ENCODE measurements at regions of chr4 and their contacts with region 1.

Region 1: DNA sequence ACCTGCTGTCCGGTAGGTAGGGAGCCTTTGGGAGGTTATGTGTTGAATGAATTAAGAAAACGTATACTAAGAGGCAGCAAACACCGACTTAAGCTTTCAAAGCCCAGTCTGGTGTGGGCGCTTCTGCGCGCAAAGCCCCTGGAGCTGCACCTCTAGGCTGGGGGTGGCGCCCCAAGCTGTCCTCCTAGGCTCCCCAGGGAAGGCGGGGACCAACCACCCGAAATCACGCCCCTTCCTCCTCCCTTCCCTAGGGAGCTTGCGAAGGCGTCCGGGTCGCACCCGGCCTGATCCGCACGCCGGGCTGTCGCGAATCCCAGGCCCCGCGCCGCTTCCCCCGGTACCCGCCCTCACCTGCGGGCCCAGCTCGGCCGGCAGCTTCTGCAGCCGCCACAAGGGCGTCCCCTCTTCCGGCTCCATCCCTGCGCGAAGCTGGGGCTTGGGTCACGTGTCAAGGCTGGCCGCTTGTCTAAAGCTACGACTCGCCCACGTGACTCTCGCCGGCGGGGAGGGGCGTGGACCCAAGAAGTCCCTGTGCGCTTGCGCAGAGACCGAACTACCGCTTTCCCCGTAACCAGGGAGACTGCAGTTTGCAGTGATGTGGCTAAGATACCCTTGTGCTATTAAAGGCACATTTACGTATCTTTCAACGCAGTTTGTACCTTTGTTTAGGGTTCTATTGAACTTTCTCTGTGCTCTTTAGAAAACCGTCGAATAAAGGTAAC is at the start of gene COMMD8:
- DNase-seq: peak; percentile 96
- H3K4me3 ChIP-seq: peak within 1 kb of the TSS; percentile 56 to 91 (median 84)
- H3K27ac ChIP-seq: peak within 1 kb of the TSS; percentile 44
- H3K4me1 ChIP-seq: peaks cover 5% of the 10 kb centered on the region
- H3K27me3 ChIP-seq: no peaks in the 10 kb centered on the region
- CTCF ChIP-seq: peak in 1 of 2 donors; percentile 32
- POLR2A ChIP-seq: peak; percentile 79
- total RNA-seq, gene COMMD8: 20.3 and 22.3 TPM in 2 replicates

Region 2: DNA sequence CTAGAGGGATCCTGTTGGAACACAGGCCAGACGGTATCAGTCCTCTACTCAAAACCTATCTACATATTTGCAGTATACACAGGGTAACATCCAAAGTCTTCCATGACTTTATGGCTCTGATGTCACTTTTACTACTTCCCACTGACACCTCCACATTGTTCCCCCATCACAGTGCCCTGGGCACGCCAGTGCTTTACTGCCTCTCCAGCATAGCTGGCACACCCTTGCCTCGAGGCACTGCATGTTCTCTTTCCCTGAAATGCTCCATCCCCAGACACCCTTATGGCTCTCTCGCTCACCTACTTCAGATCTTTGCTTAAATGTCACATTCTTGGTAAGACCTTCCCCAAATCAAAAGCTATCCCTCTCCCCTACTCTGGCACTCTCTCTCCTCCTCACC is 15.4 kb after region 1 on chr4:
- CTCF ChIA-PET with region 1: interaction called, 11 read pairs
- POLR2A ChIA-PET with region 1: no interaction called
- dilution Hi-C with region 1: no loop called
- intact Hi-C with region 1: no loop called
- DNase-seq: no peak
- H3K4me3 ChIP-seq: no peak overlapping the region
- H3K27ac ChIP-seq: no peak overlapping the region
- H3K4me1 ChIP-seq: no peaks in the 10 kb centered on the region
- H3K27me3 ChIP-seq: no peaks in the 10 kb centered on the region
- CTCF ChIP-seq: no peak
- POLR2A ChIP-seq: no peak

Region 3: DNA sequence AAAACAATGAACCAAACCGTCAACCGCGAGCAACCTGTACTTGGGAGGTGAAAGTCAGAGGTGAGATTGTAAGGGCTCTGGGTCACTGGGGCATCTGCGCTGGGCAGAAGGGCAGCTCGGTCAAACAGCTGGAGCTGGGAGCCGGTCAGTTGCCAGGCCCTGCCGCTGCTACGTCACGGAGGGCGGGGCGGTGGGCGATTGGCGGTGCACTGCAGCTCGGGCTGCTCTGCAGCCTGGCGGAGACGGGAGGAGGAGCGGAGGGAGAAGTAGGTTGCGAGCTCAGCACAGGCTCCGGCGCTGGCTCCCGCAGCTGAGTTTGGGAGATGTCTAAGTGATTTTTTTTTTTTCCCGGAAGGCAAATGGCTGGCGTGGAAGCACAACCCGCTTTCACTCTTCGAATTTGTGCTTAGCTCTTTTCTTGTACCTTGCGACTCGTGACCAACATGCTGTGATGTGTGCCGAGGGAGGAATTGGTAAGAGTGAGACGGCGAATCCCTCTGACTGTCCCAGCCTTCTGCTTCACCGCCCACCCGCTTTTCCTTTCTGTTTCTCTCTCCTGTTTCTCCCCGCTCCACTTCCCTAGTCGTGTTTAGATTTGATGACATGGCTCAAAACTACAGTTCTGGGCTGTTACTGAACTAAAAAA is 21.8 kb after region 1 on chr4 and contains the start of gene ATP10D:
- CTCF ChIA-PET with region 1: interaction called, 12 read pairs
- POLR2A ChIA-PET with region 1: interaction called, 9 read pairs
- dilution Hi-C with region 1: no loop called
- intact Hi-C with region 1: loop called (anchors 1 kb)
- DNase-seq: peak; percentile 95
- H3K4me3 ChIP-seq: peak within 1 kb of the TSS; percentile 75 to 83 (median 79)
- H3K27ac ChIP-seq: peak within 1 kb of the TSS; percentile 77
- H3K4me1 ChIP-seq: peaks cover 2% of the 10 kb centered on the region
- H3K27me3 ChIP-seq: no peaks in the 10 kb centered on the region
- CTCF ChIP-seq: no peak
- POLR2A ChIP-seq: peak; percentile 94
- total RNA-seq, gene ATP10D: 30.9 and 34.1 TPM in 2 replicates

Region 4: GRCh38 chr4:47531241-47531953 is 68.0 kb after region 1 on chr4:
- CTCF ChIA-PET with region 1: interaction called, 5 read pairs
- POLR2A ChIA-PET with region 1: no interaction called
- dilution Hi-C with region 1: no loop called
- intact Hi-C with region 1: loop called (anchors 1 kb)
- DNase-seq: peak; percentile 81
- H3K4me3 ChIP-seq: no peak overlapping the region
- H3K27ac ChIP-seq: peak overlapping the region; percentile 81
- H3K4me1 ChIP-seq: peaks cover 43% of the 10 kb centered on the region
- H3K27me3 ChIP-seq: no peaks in the 10 kb centered on the region
- CTCF ChIP-seq: no peak
- POLR2A ChIP-seq: peak; percentile 41

Region 5: GRCh38 chr4:47562297-47562696 is 98.9 kb after region 1 on chr4:
- CTCF ChIA-PET with region 1: interaction called, 14 read pairs
- POLR2A ChIA-PET with region 1: no interaction called
- dilution Hi-C with region 1: no loop called
- intact Hi-C with region 1: loop called (anchors 1 kb)
- DNase-seq: no peak
- H3K4me3 ChIP-seq: no peak overlapping the region
- H3K27ac ChIP-seq: no peak overlapping the region
- H3K4me1 ChIP-seq: peaks cover 2% of the 10 kb centered on the region
- H3K27me3 ChIP-seq: no peaks in the 10 kb centered on the region
- CTCF ChIP-seq: no peak
- POLR2A ChIP-seq: no peak

Region 6: GRCh38 chr4:47577779-47578553 is 114.6 kb after region 1 on chr4:
- CTCF ChIA-PET with region 1: interaction called, 6 read pairs
- POLR2A ChIA-PET with region 1: no interaction called
- dilution Hi-C with region 1: no loop called
- intact Hi-C with region 1: loop called (anchors 1 kb)
- DNase-seq: peak; percentile 92
- H3K4me3 ChIP-seq: peak overlapping the region in 1 of 3 experiments; percentile 26
- H3K27ac ChIP-seq: peak overlapping the region; percentile 99
- H3K4me1 ChIP-seq: peaks cover 16% of the 10 kb centered on the region
- H3K27me3 ChIP-seq: no peaks in the 10 kb centered on the region
- CTCF ChIP-seq: no peak
- POLR2A ChIP-seq: peak; percentile 40

Region 7: DNA sequence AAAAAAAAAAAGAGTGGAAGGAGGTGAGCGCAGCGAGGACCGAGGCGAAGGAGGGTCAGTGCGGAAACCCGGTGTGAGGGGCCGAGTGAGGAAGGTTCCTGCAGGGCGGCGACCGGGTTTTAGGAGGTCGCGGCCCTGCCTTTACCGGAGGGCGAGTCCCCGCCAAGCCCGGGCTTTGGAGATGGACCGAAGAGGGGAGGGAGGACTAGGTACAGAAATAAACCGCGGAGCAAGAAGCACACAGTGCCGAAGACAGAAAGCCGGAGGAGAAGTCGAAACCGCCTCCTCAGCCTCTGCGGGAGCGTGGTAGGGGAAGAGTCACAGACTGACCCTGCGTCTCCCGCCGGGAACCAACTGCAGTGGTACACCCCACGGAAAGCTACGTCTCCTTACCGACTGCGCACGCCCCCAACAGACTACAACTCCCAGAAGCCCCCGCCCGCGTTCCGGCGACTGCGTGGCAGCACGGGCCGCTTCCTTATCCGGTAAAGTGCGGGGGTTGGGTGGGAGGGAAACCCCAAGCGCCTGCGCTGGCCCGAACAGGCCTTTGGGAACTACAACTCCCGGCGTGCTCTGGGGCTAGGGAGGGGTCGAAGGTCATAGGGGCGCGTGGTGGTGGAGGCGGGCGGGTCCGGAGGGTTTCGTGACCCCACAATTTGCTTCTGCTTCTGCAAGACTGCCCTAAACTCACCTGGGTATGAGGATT is 451.0 kb after region 1 on chr4 and contains the start of gene NFXL1:
- CTCF ChIA-PET with region 1: no interaction called
- POLR2A ChIA-PET with region 1: interaction called, 3 read pairs
- dilution Hi-C with region 1: no loop called
- intact Hi-C with region 1: loop called (anchors 10 kb)
- DNase-seq: peak; percentile 97
- H3K4me3 ChIP-seq: peak within 1 kb of the TSS; percentile 73 to 93 (median 83)
- H3K27ac ChIP-seq: peak within 1 kb of the TSS; percentile 54
- H3K4me1 ChIP-seq: peaks cover 17% of the 10 kb centered on the region
- H3K27me3 ChIP-seq: no peaks in the 10 kb centered on the region
- CTCF ChIP-seq: no peak
- POLR2A ChIP-seq: peak; percentile 93
- total RNA-seq, gene NFXL1: 11.8 and 14.6 TPM in 2 replicates

Measured in endothelial cell of umbilical vein (primary cell).